Activated CD4-positive, alpha-beta memory T cell treated with anti-CD3 and anti-CD28 coated beads for 36 hours (primary cell): ENCODE measurements at regions of chr13 and their contacts with region 1.

Region 1: DNA sequence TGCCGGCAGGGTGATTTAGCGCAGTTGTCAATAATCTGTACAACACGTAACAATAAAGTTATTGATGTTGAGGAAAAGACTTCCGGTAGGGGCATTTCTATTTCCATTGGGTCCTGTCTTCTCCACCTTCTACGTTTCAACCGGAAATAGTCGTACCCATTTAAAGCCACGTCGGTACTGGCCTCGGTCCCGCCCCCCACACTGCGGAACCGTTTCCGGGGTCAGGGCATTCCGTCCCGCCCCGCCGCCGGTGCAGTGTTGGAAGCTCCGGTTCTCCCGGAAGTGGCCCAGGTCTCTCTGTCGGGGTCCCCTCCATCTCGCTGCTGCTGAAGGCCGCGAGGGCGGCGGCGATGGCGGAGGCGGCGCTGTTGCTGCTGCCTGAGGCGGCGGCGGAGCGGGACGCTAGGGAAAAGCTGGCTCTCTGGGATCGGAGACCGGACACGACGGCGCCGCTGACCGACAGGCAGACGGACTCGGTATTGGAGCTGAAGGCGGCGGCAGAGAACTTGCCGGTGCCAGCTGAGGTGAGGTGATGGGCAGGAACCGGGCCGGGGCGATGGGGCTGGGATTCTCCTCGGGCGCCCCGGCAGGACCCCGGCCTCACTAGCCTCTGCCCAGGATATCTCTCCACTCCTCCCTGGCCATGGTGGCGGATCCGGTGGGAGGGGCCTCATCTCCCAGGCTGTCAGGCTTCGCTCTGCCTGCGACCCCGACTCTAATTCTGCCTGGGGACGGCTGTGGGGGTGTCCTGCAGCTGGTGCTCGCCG is at the start of gene COG3:
- DNase-seq: peak; percentile 97
- H3K4me3 Mint-ChIP-seq: peak within 1 kb of the TSS; percentile 85
- H3K27ac Mint-ChIP-seq: peak within 1 kb of the TSS; percentile 94
- H3K4me1 Mint-ChIP-seq: peaks cover 47% of the 10 kb centered on the region
- H3K27me3 Mint-ChIP-seq: no peaks in the 10 kb centered on the region
- total RNA-seq, gene COG3: 19.5 to 20.5 TPM

Region 2: GRCh38 chr13:45340926-45341750 is 123.7 kb before region 1 on chr13 and contains the start of gene TPT1:
- CTCF ChIA-PET with region 1: interaction called, 4 read pairs
- POLR2A ChIA-PET with region 1: interaction called, 11 read pairs
- intact Hi-C with region 1: loop called (anchors 1 kb)
- DNase-seq: peak; percentile 100
- H3K4me3 Mint-ChIP-seq: peak within 1 kb of the TSS; percentile 94
- H3K27ac Mint-ChIP-seq: peak within 1 kb of the TSS; percentile 99
- H3K4me1 Mint-ChIP-seq: peaks cover 45% of the 10 kb centered on the region
- H3K27me3 Mint-ChIP-seq: no peaks in the 10 kb centered on the region
- total RNA-seq, gene TPT1: 3,227 to 3,264 TPM

Region 3: GRCh38 chr13:45393941-45394570 is 70.8 kb before region 1 on chr13:
- CTCF ChIA-PET with region 1: interaction called, 8 read pairs
- POLR2A ChIA-PET with region 1: interaction called, 6 read pairs
- intact Hi-C with region 1: loop called (anchors 1 kb)
- DNase-seq: peak; percentile 47
- H3K4me3 Mint-ChIP-seq: no peak overlapping the region
- H3K27ac Mint-ChIP-seq: no peak overlapping the region
- H3K4me1 Mint-ChIP-seq: peaks cover 46% of the 10 kb centered on the region
- H3K27me3 Mint-ChIP-seq: no peaks in the 10 kb centered on the region

Region 4: GRCh38 chr13:45417790-45418534 is 46.9 kb before region 1 on chr13 and contains the start of gene SLC25A30:
- CTCF ChIA-PET with region 1: interaction called, 6 read pairs
- POLR2A ChIA-PET with region 1: interaction called, 5 read pairs
- intact Hi-C with region 1: loop called (anchors 1 kb)
- DNase-seq: peak; percentile 93
- H3K4me3 Mint-ChIP-seq: peak within 1 kb of the TSS; percentile 84
- H3K27ac Mint-ChIP-seq: peak within 1 kb of the TSS; percentile 88
- H3K4me1 Mint-ChIP-seq: peaks cover 16% of the 10 kb centered on the region
- H3K27me3 Mint-ChIP-seq: no peaks in the 10 kb centered on the region
- total RNA-seq, gene SLC25A30: 14.6 to 15.3 TPM

Region 5: DNA sequence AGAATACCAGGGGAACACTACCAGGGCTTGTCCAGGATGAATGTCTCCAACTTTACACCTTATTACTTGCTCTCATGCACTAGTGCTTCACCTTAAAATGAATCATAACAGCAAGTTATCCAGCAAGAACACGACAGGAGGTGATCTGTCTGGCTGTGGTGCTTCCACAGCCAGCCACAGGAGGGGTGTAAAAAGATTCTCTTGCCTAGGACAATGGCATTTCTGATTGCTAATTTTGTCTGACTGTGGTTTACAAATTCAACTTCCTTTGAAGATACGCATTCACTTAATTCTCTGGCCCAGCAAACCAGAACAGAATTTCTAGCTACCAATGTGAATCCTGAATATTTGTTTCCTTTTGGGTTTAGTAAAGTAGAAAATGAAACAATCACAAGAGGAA is 23.2 kb before region 1 on chr13:
- CTCF ChIA-PET with region 1: no interaction called
- POLR2A ChIA-PET with region 1: no interaction called
- intact Hi-C with region 1: loop called (anchors 2 kb)
- DNase-seq: peak; percentile 45
- H3K4me3 Mint-ChIP-seq: no peak overlapping the region
- H3K27ac Mint-ChIP-seq: no peak overlapping the region
- H3K4me1 Mint-ChIP-seq: peaks cover 9% of the 10 kb centered on the region
- H3K27me3 Mint-ChIP-seq: no peaks in the 10 kb centered on the region

Region 6: GRCh38 chr13:45511310-45512097 is 46.6 kb after region 1 on chr13:
- CTCF ChIA-PET with region 1: no interaction called
- POLR2A ChIA-PET with region 1: no interaction called
- intact Hi-C with region 1: loop called (anchors 10 kb)
- DNase-seq: peak; percentile 13
- H3K4me3 Mint-ChIP-seq: no peak overlapping the region
- H3K27ac Mint-ChIP-seq: peak overlapping the region; percentile 70
- H3K4me1 Mint-ChIP-seq: peaks cover 13% of the 10 kb centered on the region
- H3K27me3 Mint-ChIP-seq: no peaks in the 10 kb centered on the region